ENCODE measurements at regions of chr6 and their contacts with region 1.

Region 1: DNA sequence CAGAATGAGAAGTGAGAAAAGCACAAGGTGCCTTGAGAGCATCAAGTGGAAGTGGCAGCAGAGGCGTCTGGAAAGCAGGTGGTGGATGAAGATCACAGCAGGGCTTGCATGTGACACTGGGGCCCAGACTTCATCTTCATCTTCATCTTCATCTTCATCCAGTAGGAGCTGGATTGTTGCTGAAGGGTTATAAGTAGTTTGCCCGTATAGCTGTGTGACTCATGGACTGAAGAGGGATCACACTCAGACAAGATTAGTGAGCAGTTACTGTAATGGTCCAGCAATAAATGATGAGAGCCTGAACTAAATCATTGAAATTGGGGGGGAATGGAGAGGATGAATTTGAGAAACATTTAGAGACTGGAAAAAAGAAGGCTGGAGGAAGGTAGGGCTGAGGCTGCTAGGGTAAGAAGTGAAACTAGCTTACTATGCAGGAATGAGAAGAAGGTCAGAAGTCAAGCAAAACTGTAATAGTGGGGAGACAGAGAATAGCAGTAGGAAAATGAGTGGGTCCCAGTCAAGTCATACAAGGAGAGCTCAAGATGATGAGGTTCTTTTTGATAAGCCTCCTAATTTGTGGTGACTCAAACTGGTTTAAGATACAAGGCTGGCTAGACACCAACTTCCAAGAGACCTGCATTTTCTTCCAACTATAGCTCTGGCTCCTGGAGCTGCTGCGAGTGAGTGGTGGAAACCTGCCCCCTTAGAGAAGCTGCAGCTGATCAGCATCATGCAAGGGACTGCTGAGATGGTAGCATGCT is 92.3 kb upstream of the BEND6 start:
- DNase-seq: no peak
- ATAC-seq: peak; percentile 63

Region 2: GRCh38 chr6:56399250-56399671 is 463.3 kb before region 1 on chr6:
- intact Hi-C with region 1: loop called (anchors 10 kb)
- DNase-seq: no peak
- ATAC-seq: no peak